WTC11 (cell line): ENCODE measurements at regions of chr11 and their contacts with region 1.

Region 1: GRCh38 chr11:65251476-65251875 is 10.3 kb upstream of the POLA2 start:
- DNase-seq: no peak
- ATAC-seq: no peak
- H3K4me3 Mint-ChIP-seq: no peak overlapping the region
- H3K27ac Mint-ChIP-seq: no peak overlapping the region
- H3K4me1 Mint-ChIP-seq: no peaks in the 10 kb centered on the region
- H3K27me3 Mint-ChIP-seq: no peaks in the 10 kb centered on the region
- CTCF ChIP-seq: no peak

Region 2: DNA sequence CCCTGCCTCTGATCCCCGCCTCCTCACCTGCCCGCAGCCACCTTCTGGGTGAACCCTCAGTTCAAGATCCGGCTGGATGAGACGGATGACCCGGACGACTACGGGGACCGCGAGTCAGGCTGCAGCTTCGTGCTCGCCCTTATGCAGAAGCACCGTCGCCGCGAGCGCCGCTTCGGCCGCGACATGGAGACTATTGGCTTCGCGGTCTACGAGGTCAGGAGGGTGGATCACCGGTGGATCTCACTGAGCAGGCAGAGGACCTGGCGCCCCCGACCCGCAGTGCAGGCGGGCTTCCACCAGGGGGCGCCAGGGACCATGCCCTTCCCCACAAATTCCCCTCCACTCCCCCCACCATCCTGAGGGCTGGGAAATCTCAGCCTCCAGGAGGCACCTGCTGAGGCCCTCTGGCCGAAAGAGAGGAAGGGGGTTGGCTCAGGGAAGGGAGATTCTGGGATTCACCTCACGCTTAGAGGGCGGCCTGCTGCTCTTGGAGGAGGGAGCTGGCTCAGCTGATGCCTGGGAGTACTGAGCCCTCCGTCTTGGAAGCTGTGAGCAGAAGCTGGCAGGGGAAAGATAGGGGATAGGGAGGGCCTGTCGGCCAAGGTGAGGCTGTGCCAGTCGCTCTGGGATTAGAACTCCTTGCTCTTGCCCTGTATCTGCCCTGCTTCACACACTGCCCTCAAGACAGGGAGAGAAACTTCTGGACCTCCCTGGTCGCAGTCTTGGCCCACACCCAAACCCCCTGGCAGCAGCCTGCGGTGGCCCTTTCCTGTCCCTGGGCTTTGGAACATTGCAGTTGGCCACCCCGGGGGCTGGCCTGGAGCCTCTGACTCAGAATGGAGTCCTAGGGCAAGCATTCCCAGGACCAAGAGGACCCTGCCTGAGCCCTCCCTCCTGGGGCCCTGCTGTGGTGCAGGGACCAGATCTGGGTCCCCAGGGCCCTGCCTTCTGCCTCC is 46.6 kb before region 1 on chr11:
- CTCF ChIA-PET with region 1: interaction called, 82 read pairs
- POLR2A ChIA-PET with region 1: no interaction called
- DNase-seq: peak; percentile 88
- ATAC-seq: peak; percentile 93
- H3K4me3 Mint-ChIP-seq: peak overlapping the region; percentile 60
- H3K27ac Mint-ChIP-seq: peak overlapping the region; percentile 93
- H3K4me1 Mint-ChIP-seq: peaks cover 16% of the 10 kb centered on the region
- H3K27me3 Mint-ChIP-seq: no peaks in the 10 kb centered on the region
- CTCF ChIP-seq: peak; percentile 99

Region 3: DNA sequence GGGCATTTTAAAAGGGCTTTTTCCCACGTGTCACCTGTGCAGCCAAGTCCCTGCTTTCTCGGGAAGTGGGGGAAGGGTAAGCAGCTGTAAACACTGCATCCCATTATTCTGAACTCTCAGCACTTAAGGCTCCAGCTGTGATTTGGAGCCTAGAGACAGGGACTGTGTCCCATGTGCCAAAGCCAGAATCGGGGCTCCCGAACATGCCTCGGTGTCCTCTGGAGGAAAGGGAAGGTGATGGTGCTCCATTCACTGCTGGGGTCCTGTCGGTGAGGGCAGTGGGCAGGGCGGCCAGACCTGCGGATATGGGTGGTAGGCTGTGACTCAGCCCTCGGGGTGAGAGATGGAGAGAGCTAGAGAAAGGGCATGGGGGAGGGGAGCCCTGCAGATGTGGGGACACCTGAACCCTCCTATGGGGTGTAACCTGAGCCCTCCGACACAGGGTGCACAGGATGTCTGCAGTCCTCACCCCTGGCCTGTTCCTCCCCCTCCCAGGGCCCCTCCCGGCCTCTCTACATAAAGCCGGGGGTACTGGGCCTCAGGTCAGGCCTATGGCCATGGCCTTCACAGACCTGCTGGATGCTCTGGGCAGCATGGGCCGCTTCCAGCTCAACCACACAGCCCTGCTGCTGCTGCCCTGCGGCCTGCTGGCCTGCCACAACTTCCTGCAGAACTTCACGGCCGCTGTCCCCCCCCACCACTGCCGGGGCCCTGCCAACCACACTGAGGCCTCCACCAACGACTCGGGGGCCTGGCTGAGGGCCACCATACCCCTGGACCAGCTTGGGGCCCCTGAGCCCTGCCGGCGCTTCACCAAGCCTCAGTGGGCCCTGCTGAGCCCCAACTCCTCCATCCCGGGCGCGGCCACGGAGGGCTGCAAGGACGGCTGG is 37.9 kb before region 1 on chr11:
- CTCF ChIA-PET with region 1: interaction called, 82 read pairs
- POLR2A ChIA-PET with region 1: no interaction called
- DNase-seq: peak; percentile 84
- ATAC-seq: peak; percentile 85
- H3K4me3 Mint-ChIP-seq: peak overlapping the region; percentile 58
- H3K27ac Mint-ChIP-seq: peak overlapping the region; percentile 100
- H3K4me1 Mint-ChIP-seq: peaks cover 42% of the 10 kb centered on the region
- H3K27me3 Mint-ChIP-seq: no peaks in the 10 kb centered on the region
- CTCF ChIP-seq: no peak

Region 4: DNA sequence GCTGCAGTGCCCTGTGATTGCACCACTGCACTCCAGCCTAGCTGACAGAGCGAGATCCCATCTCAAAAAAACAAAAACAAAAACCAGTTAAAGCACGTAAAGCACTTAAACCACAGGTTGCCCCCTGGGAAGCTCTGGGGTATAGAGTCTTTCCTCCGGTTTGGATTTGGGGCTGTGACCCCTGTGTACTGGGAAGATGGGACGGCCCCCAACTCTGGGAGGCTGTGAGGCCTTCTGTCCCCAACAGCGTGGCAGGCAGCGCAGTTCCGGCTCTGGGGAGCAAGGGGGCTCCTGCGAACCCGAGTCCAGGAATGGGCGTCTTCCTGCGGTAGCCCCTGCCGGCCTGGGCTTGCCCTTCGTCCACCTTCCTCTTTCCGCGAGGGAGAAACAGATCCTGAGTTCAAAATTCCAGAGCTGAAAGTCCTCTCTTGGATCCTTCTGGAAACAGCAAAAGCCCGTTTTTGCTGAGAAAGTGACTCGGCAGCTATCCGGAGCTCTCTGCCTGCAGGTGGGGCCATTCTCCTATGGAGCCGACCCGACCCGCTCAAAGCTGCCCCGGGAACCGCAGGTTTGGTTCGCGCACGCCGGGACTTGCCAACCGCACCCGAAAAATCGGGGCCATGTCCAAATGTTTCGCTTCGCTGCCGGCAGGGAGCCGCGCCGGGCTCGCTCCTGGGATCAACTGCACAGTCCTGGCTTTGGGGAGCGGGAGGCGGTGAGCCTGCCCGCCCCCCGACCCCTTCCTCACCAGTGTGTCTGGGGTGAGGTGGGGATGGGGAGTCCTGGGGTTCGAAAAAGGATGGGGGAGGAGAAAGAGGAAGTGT is 26.0 kb before region 1 on chr11:
- CTCF ChIA-PET with region 1: interaction called, 138 read pairs
- POLR2A ChIA-PET with region 1: interaction called, 7 read pairs
- DNase-seq: peak; percentile 73
- ATAC-seq: peak; percentile 87
- H3K4me3 Mint-ChIP-seq: peak overlapping the region; percentile 81
- H3K27ac Mint-ChIP-seq: peak overlapping the region; percentile 53
- H3K4me1 Mint-ChIP-seq: peaks cover 19% of the 10 kb centered on the region
- H3K27me3 Mint-ChIP-seq: no peaks in the 10 kb centered on the region; the same call in 1 of the 2 replicates
- CTCF ChIP-seq: no peak

Region 5: GRCh38 chr11:65236194-65237059 is 15.0 kb before region 1 on chr11:
- CTCF ChIA-PET with region 1: interaction called, 10 read pairs
- POLR2A ChIA-PET with region 1: no interaction called
- DNase-seq: no peak
- ATAC-seq: no peak
- H3K4me3 Mint-ChIP-seq: no peak overlapping the region
- H3K27ac Mint-ChIP-seq: peak overlapping the region; percentile 60; the same call in 1 of the 2 replicates
- H3K4me1 Mint-ChIP-seq: peaks cover 4% of the 10 kb centered on the region; the same call in 1 of the 2 replicates
- H3K27me3 Mint-ChIP-seq: no peaks in the 10 kb centered on the region
- CTCF ChIP-seq: no peak

Region 6: GRCh38 chr11:65261591-65262380 is 10.3 kb after region 1 on chr11 and contains the start of gene POLA2:
- CTCF ChIA-PET with region 1: interaction called, 18 read pairs
- POLR2A ChIA-PET with region 1: no interaction called
- DNase-seq: peak; percentile 88
- ATAC-seq: peak; percentile 92
- H3K4me3 Mint-ChIP-seq: peak within 1 kb of the TSS; percentile 92
- H3K27ac Mint-ChIP-seq: peak within 1 kb of the TSS; percentile 69
- H3K4me1 Mint-ChIP-seq: peaks cover 18% of the 10 kb centered on the region
- H3K27me3 Mint-ChIP-seq: peaks cover 13% of the 10 kb centered on the region
- CTCF ChIP-seq: no peak
- total RNA-seq, gene POLA2: 26.9 to 35.6 TPM (median 28.5 TPM) in 3 replicates

Region 7: DNA sequence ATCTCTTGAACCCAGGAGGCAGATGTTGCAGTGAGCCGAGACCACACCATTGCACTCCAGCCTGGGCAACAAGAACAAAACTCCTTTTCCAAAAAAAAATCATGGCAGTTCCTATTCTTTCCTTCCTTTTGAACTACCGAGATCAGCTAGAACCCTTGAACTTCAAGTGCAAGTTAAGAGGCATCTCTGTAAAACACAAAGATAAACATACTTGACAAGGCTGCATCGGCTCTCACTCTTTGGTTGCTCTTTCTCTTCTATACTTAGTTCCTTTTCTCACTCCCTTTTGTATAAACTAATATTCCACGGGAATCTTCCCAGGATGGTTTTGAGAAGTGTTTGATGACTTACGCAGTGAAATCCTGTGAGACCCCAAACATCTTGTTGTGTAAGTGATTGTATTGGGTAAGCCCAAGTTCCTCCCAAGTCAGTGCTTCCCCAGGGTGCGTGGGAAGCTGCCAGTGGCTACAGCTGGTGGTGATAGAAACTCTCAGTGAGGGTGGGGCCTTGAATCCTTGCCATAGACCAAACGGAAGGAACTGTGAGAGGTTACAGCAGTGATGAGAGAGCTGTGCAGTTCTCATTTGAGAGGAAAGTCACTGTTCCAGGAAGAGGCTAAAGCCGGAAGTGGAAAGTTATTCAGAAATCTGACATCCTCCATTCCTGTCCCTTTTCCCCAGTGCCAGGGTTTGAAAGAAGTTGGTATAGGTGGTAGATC is 39.1 kb after region 1 on chr11:
- CTCF ChIA-PET with region 1: no interaction called
- POLR2A ChIA-PET with region 1: no interaction called
- DNase-seq: no peak
- ATAC-seq: no peak
- H3K4me3 Mint-ChIP-seq: no peak overlapping the region
- H3K27ac Mint-ChIP-seq: no peak overlapping the region
- H3K4me1 Mint-ChIP-seq: peaks cover 5% of the 10 kb centered on the region
- H3K27me3 Mint-ChIP-seq: no peaks in the 10 kb centered on the region
- CTCF ChIP-seq: no peak

Region 8: DNA sequence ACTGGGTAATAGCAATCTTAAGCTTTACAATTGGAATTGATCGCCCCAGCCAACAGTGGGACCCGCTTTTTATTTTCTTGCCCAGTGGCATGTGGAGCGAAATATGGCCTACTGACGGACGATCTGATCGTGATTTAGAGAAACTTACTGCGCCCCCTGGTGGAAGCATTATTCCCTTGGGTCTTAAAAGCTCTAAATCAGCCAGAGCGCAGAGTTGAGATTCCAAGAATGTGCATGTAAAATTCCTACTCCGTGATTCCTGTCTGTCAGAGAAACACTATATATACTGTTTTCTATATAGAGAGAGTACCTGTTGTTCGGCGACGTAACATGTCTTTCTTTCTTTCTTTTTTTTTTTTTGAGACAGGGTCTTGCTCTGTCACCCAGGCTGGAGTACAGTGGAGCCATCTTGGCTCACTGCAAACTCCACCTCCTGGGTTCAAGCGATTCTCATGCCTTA is 78.5 kb after region 1 on chr11:
- CTCF ChIA-PET with region 1: interaction called, 13 read pairs
- POLR2A ChIA-PET with region 1: no interaction called
- DNase-seq: peak; percentile 90
- ATAC-seq: peak; percentile 31
- H3K4me3 Mint-ChIP-seq: peak overlapping the region; percentile 31; the same call in 1 of the 2 replicates
- H3K27ac Mint-ChIP-seq: no peak overlapping the region
- H3K4me1 Mint-ChIP-seq: peaks cover 13% of the 10 kb centered on the region
- H3K27me3 Mint-ChIP-seq: peaks cover 5% of the 10 kb centered on the region
- CTCF ChIP-seq: peak; percentile 79